ENCODE measurements at regions of chr11 and their contacts with region 1.

Region 1: GRCh38 chr11:124953753-124954589 is at the start of gene CCDC15:
- DNase-seq: peak; percentile 95
- H3K4me3 Mint-ChIP-seq: no peak within 1 kb of the TSS
- H3K27ac Mint-ChIP-seq: no peak within 1 kb of the TSS
- H3K4me1 Mint-ChIP-seq: no peaks in the 10 kb centered on the region
- H3K27me3 Mint-ChIP-seq: no peaks in the 10 kb centered on the region
- total RNA-seq, gene CCDC15: 3.1 and 3.4 TPM in 2 replicates

Region 2: DNA sequence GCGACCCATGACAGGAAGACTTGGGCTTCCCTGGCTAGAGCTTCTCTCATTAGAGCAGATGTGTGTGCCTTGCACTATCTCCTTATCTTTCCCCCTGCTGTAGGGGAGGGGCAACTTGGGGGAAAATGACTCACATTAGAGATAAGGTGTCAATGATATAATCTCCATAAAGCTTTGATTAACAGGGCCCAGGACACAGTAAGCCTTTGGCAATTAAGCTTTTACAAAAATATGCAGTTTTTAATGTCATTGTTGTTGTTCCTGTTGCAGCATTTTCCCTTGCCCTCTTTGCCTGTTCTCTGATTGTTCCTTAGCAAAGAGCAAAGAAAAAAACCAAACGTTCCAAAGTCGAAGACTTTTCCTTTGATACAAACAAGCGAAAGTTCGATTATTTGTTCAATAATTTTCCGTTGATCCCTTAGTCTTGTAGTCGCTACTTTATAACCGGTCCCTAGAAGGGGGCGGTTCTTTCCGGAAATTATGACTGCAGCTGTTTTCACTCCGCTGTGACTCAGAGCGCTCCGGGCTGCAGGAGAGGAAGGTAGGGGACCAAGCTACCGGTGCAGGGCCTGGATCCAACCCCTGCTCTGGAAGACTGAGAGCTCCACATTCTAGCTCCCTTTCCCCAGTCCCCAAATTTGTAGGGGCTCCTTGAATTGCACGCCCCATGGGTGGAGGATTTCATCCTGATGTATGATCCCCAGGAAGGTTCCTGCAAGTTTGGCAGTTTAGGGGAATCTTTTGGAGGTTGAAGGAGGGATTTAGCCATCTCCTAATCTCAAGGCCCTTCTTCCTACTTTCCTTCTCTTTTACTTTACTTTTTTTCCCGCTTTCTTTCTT is 838.8 kb before region 1 on chr11 and contains the start of gene VWA5A:
- intact Hi-C with region 1: loop called (anchors 10 kb)
- DNase-seq: peak; percentile 71
- H3K4me3 Mint-ChIP-seq: peak within 1 kb of the TSS; percentile 94
- H3K27ac Mint-ChIP-seq: peak within 1 kb of the TSS; percentile 92
- H3K4me1 Mint-ChIP-seq: peaks cover 34% of the 10 kb centered on the region
- H3K27me3 Mint-ChIP-seq: peaks cover 7% of the 10 kb centered on the region
- total RNA-seq, gene VWA5A: 7.9 and 8.0 TPM in 2 replicates

Region 3: GRCh38 chr11:124746621-124747243 is 207.2 kb before region 1 on chr11:
- intact Hi-C with region 1: loop called (anchors 5 kb)
- DNase-seq: peak; percentile 64
- H3K4me3 Mint-ChIP-seq: peak overlapping the region; percentile 89
- H3K27ac Mint-ChIP-seq: peak overlapping the region; percentile 86
- H3K4me1 Mint-ChIP-seq: peaks cover 28% of the 10 kb centered on the region
- H3K27me3 Mint-ChIP-seq: peaks cover 12% of the 10 kb centered on the region

Region 4: GRCh38 chr11:124920870-124921609 is 32.9 kb before region 1 on chr11:
- intact Hi-C with region 1: loop called (anchors 2 kb)
- DNase-seq: peak; percentile 62
- H3K4me3 Mint-ChIP-seq: no peak overlapping the region
- H3K27ac Mint-ChIP-seq: no peak overlapping the region
- H3K4me1 Mint-ChIP-seq: peaks cover 10% of the 10 kb centered on the region
- H3K27me3 Mint-ChIP-seq: peaks cover 8% of the 10 kb centered on the region

Region 5: DNA sequence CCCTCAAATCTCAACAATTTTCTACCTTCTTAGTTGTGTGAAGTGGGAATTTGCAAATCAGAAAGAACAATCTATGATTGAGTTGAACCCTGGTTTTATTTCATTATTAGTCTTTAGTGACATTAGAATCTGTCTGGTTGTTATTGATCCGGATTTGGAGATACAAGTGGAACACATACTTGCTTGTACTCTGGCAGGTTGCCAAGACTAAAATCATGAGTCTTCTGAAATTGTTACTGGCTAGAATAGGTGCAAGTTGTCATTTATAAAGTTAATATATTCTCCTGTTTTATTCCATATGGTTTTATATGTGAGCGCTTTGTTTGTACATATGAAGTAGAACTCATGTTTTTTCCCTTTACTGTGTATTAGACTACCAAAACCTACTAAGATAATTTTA is 23.0 kb after region 1 on chr11:
- intact Hi-C with region 1: no loop called
- DNase-seq: no peak
- H3K4me3 Mint-ChIP-seq: no peak overlapping the region
- H3K27ac Mint-ChIP-seq: no peak overlapping the region
- H3K4me1 Mint-ChIP-seq: no peaks in the 10 kb centered on the region
- H3K27me3 Mint-ChIP-seq: no peaks in the 10 kb centered on the region

Region 6: GRCh38 chr11:125568970-125569914 is 615.3 kb after region 1 on chr11 and contains the start of gene EI24:
- intact Hi-C with region 1: loop called (anchors 5 kb)
- DNase-seq: peak; percentile 88
- H3K4me3 Mint-ChIP-seq: peak within 1 kb of the TSS; percentile 95
- H3K27ac Mint-ChIP-seq: peak within 1 kb of the TSS; percentile 94
- H3K4me1 Mint-ChIP-seq: peaks cover 23% of the 10 kb centered on the region
- H3K27me3 Mint-ChIP-seq: no peaks in the 10 kb centered on the region
- total RNA-seq, gene EI24: 61.6 and 62.4 TPM in 2 replicates

Region 7: GRCh38 chr11:126062679-126063506 is 1108.9 kb after region 1 on chr11 and contains the start of gene CDON:
- intact Hi-C with region 1: loop called (anchors 5 kb)
- DNase-seq: peak; percentile 90
- H3K4me3 Mint-ChIP-seq: peak within 1 kb of the TSS; percentile 84
- H3K27ac Mint-ChIP-seq: peak within 1 kb of the TSS; percentile 96
- H3K4me1 Mint-ChIP-seq: peaks cover 9% of the 10 kb centered on the region
- H3K27me3 Mint-ChIP-seq: peaks cover 38% of the 10 kb centered on the region
- total RNA-seq, gene CDON: 1.3 and 1.8 TPM in 2 replicates

Measured in activated T-helper 1 cell treated with anti-CD3 and anti-CD28 coated beads, Interleukin-12 subunit alpha, Interleukin-12 subunit beta, Interleukin-2, Interleukin-4 antibody, amounts not matched to agents 30 ng/mL and 10 ng/mL and 1 ng/mL, durations not matched to agents 14 hours and 24 hours and 36 hours (primary cell).